Activated B cell treated with CpG ODN at 0.5 μM for 24 hours (primary cell): ENCODE measurements at regions of chr19 and their contacts with region 1.

Region 1: DNA sequence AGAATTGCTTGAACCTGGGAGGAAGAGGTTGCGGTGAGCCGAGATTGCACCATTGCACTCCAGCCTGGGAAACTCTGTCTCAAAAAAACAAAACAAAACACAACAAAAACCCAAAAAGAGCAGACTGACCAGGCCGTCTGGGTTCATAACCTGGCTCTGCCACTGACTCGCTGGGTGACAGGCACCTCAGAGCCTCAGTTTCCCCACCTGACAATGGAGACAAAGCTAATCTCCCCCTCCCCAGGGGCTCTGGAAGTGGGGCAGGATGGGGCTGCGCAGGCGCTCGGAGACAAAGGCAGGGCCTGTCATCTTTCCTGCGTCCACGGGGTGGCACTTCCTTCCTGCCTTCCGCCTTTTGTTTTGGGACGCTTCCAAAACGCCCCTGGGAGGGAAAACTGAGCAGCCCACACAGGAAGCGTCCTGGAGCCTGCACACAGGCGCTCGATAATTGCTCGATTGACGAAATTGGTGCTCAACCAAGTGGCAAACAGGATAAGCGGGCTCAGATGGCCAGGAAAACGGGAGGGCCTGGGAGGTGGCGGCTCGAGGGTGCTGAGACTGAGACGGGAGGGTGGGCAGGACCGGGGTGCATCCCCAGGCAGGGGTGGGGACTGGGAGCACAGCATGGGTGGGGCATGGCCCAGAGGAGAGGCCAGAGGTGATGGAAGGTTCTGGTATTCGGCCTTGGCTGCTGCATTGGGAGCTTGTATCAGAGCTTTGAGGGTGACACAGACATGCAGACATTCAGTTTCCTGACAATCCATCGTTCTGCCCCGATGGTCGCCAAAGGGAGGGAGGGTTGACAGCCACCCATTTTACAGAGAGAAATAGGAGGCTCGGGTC is 17.8 kb downstream of the SPC24 start:
- DNase-seq: no peak
- ATAC-seq: peak; percentile 50
- H3K4me3 Mint-ChIP-seq: no peak overlapping the region
- H3K27ac Mint-ChIP-seq: no peak overlapping the region
- H3K4me1 Mint-ChIP-seq: peaks cover 8% of the 10 kb centered on the region
- H3K27me3 Mint-ChIP-seq: peaks cover 21% of the 10 kb centered on the region
- CTCF ChIP-seq: no peak

Region 2: GRCh38 chr19:10380313-10381102 is 757.3 kb before region 1 on chr19 and contains the start of gene TYK2:
- CTCF ChIA-PET with region 1: no interaction called
- POLR2A ChIA-PET with region 1: interaction called, 10 read pairs
- intact Hi-C with region 1: no loop called
- DNase-seq: peak; percentile 95
- ATAC-seq: peak; percentile 93
- H3K4me3 Mint-ChIP-seq: peak within 1 kb of the TSS; percentile 97
- H3K27ac Mint-ChIP-seq: peak within 1 kb of the TSS; percentile 86
- H3K4me1 Mint-ChIP-seq: peaks cover 23% of the 10 kb centered on the region
- H3K27me3 Mint-ChIP-seq: no peaks in the 10 kb centered on the region
- CTCF ChIP-seq: no peak
- total RNA-seq, gene TYK2: 302 and 356 TPM in 2 replicates

Region 3: DNA sequence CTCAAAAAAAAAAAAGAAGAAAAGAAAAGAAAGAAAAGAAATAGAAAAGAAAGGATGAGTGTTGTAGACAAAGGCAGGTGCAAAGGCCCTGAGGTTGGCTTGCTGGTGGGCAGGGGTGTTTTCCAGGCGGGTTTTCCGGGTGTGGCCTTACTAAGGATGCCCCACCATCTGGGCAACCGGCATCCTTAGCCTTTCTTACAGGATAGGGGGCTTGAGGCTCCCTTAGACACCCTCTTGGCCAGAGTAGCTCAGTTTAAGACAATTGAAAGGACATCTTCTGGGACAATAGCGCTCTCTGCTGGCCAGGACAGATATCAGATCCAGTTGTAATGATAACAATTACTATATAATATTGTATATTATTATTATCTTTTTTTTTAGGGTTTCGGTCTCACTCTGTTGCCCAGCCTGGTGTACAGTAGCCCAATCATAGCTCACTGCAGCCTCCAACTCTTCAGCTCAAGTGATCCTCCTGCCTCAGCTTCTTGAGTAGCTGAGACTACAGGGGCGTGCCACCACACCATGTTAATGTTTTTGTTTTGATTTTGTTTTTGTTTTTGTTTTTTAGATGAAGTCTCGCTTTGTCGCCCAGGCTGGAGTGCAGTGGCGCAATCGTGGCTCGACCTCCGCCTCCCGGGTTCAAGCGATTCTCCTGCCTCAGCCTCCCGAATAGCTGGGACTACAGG is 438.0 kb before region 1 on chr19:
- CTCF ChIA-PET with region 1: no interaction called
- POLR2A ChIA-PET with region 1: no interaction called
- intact Hi-C with region 1: no loop called
- DNase-seq: peak; percentile 28
- ATAC-seq: no peak
- H3K4me3 Mint-ChIP-seq: no peak overlapping the region
- H3K27ac Mint-ChIP-seq: no peak overlapping the region
- H3K4me1 Mint-ChIP-seq: peaks cover 26% of the 10 kb centered on the region
- H3K27me3 Mint-ChIP-seq: peaks cover 5% of the 10 kb centered on the region
- CTCF ChIP-seq: peak; percentile 60

Region 4: DNA sequence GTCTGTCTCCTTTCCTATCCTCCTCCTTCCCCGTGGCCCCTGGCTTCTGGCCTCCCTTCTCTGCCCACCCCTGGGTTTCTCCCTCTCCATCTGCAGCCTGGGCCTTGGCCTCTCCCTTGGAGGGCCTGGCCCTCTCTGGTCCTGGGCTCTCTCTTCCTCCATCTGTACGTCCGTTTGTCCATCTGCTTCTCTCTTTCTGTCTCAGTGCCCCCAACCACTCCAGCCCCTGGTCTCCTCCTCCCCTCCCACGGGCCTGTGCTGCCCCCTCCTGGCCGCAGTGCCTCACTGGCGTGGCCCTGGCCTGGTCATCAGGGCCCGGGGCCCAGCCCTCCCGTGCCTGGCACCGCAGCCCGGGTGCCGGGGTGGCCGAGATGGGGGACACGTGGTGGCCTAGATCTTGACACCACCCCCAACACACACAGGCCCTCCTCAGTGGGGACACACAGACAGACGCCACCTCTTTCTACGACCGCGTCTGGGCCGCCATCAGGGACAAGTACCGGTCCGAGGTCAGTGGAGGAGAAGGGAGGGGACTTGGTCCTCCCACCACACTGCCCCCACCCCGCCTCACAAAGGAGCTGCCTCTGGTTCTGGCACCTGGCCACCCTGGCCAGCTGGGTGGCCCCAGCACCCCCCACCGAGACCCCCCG is 309.0 kb after region 1 on chr19:
- CTCF ChIA-PET with region 1: no interaction called
- POLR2A ChIA-PET with region 1: no interaction called
- intact Hi-C with region 1: loop called (anchors 10 kb)
- DNase-seq: peak; percentile 61
- ATAC-seq: peak; percentile 81
- H3K4me3 Mint-ChIP-seq: no peak overlapping the region
- H3K27ac Mint-ChIP-seq: no peak overlapping the region
- H3K4me1 Mint-ChIP-seq: peaks cover 3% of the 10 kb centered on the region
- H3K27me3 Mint-ChIP-seq: no peaks in the 10 kb centered on the region
- CTCF ChIP-seq: no peak

Region 5: GRCh38 chr19:11482384-11483050 is 344.8 kb after region 1 on chr19:
- CTCF ChIA-PET with region 1: interaction called, 3 read pairs
- POLR2A ChIA-PET with region 1: no interaction called
- intact Hi-C with region 1: loop called (anchors 5 kb)
- DNase-seq: peak; percentile 85
- ATAC-seq: peak; percentile 72
- H3K4me3 Mint-ChIP-seq: peak overlapping the region; percentile 74
- H3K27ac Mint-ChIP-seq: peak overlapping the region; percentile 41
- H3K4me1 Mint-ChIP-seq: peaks cover 30% of the 10 kb centered on the region
- H3K27me3 Mint-ChIP-seq: peaks cover 23% of the 10 kb centered on the region
- CTCF ChIP-seq: no peak